Activated CD4-positive, alpha-beta T cell treated with anti-CD3 and anti-CD28 coated beads, Interleukin-2, amount 10 ng/mL, durations not matched to agents 24 days and 14 days (primary cell): ENCODE measurements at regions of chr3 and their contacts with region 1.

Region 1: GRCh38 chr3:58305882-58306711 is at the starts of genes HTD2 and RPP14:
- DNase-seq: peak; percentile 100
- H3K4me3 Mint-ChIP-seq: peak within 1 kb of the TSS; percentile 98
- H3K27ac Mint-ChIP-seq: peak within 1 kb of the TSS; percentile 99
- H3K4me1 Mint-ChIP-seq: peaks cover 22% of the 10 kb centered on the region
- H3K27me3 Mint-ChIP-seq: peaks cover 10% of the 10 kb centered on the region
- total RNA-seq, gene HTD2: 9.7 and 11.5 TPM in 2 replicates
- total RNA-seq, gene RPP14: 22.7 and 25.2 TPM in 2 replicates

Region 2: GRCh38 chr3:57597122-57597923 is 708.8 kb before region 1 on chr3 and contains the start of gene ARF4:
- intact Hi-C with region 1: loop called (anchors 1 kb)
- DNase-seq: peak; percentile 100
- H3K4me3 Mint-ChIP-seq: peak within 1 kb of the TSS; percentile 87
- H3K27ac Mint-ChIP-seq: peak within 1 kb of the TSS; percentile 99
- H3K4me1 Mint-ChIP-seq: peaks cover 32% of the 10 kb centered on the region
- H3K27me3 Mint-ChIP-seq: no peaks in the 10 kb centered on the region
- total RNA-seq, gene ARF4: 84.4 and 91.4 TPM in 2 replicates

Region 3: GRCh38 chr3:58202917-58203360 is 103.2 kb before region 1 on chr3:
- intact Hi-C with region 1: no loop called
- DNase-seq: no peak
- H3K4me3 Mint-ChIP-seq: no peak overlapping the region
- H3K27ac Mint-ChIP-seq: no peak overlapping the region
- H3K4me1 Mint-ChIP-seq: peaks cover 14% of the 10 kb centered on the region
- H3K27me3 Mint-ChIP-seq: peaks cover 15% of the 10 kb centered on the region

Region 4: GRCh38 chr3:58237238-58237940 is 68.7 kb before region 1 on chr3 and contains the start of gene ABHD6:
- intact Hi-C with region 1: loop called (anchors 1 kb)
- DNase-seq: peak; percentile 95
- H3K4me3 Mint-ChIP-seq: peak within 1 kb of the TSS; percentile 94
- H3K27ac Mint-ChIP-seq: peak within 1 kb of the TSS; percentile 83
- H3K4me1 Mint-ChIP-seq: peaks cover 15% of the 10 kb centered on the region
- H3K27me3 Mint-ChIP-seq: peaks cover 27% of the 10 kb centered on the region
- total RNA-seq, gene ABHD6: 9.8 and 10.8 TPM in 2 replicates

Region 5: DNA sequence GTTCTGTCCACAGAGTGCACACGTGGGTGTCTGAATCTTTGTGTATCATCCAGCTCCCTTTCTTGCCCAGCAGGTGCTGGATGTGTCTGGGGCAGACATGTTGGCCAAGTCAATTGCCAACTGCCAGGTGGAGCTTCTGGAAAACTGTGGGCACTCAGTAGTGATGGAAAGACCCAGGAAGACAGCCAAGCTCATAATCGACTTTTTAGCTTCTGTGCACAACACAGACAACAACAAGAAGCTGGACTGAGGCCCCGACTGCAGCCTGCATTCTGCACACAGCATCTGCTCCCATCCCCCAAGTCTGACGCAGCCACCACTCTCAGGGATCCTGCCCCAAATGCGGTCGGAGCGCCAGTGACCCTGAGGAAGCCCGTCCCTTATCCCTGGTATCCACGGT is 12.6 kb before region 1 on chr3:
- intact Hi-C with region 1: no loop called
- DNase-seq: no peak
- H3K4me3 Mint-ChIP-seq: no peak overlapping the region
- H3K27ac Mint-ChIP-seq: no peak overlapping the region
- H3K4me1 Mint-ChIP-seq: no peaks in the 10 kb centered on the region
- H3K27me3 Mint-ChIP-seq: no peaks in the 10 kb centered on the region

Region 6: DNA sequence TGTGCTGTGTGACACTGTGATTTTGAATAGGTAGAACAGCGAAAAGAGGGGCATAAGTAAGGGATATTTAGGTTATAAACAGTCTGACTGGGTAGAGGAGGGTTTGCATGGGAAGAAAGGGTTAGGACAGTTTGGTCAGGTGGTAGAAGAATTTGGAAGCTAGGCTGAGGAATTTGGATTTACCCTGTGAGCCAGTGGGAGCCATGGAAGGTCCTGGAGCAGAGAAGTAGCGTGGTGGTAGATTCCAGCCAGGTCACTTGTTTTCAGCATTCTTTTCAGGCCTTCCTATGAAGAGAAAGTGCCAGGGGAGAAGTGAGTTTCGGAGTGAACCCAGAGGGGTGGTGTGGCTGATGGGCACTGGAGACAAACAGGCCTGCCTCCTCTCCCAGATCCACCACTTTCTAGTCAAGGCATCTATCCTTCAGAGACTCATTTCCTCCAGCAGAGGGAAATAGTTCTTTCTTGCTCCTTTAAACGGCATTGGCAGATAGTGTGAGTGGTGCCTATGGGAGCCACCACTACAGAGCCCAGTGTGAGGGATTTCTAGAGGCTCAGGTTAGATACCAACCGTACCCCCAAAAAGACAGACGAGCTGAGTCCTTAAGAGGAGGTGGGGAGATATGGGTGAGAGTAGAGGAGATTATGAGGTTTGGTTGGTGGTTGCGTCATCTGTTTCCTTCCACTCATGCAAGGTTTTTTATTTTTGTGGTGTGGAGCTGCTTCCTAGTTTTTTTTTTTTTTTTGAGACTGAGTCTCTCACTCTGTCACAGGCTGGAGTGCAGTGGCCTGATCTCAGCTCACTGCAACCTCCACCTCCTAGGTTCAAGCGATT is 47.8 kb after region 1 on chr3:
- intact Hi-C with region 1: loop called (anchors 1 kb)
- DNase-seq: peak; percentile 87
- H3K4me3 Mint-ChIP-seq: peak overlapping the region; percentile 82
- H3K27ac Mint-ChIP-seq: peak overlapping the region; percentile 92
- H3K4me1 Mint-ChIP-seq: peaks cover 83% of the 10 kb centered on the region
- H3K27me3 Mint-ChIP-seq: no peaks in the 10 kb centered on the region

Region 7: GRCh38 chr3:58471025-58471887 is 165.2 kb after region 1 on chr3:
- intact Hi-C with region 1: loop called (anchors 1 kb)
- DNase-seq: peak; percentile 88
- H3K4me3 Mint-ChIP-seq: peak overlapping the region; percentile 46
- H3K27ac Mint-ChIP-seq: peak overlapping the region; percentile 62
- H3K4me1 Mint-ChIP-seq: peaks cover 45% of the 10 kb centered on the region
- H3K27me3 Mint-ChIP-seq: peaks cover 2% of the 10 kb centered on the region

Region 8: DNA sequence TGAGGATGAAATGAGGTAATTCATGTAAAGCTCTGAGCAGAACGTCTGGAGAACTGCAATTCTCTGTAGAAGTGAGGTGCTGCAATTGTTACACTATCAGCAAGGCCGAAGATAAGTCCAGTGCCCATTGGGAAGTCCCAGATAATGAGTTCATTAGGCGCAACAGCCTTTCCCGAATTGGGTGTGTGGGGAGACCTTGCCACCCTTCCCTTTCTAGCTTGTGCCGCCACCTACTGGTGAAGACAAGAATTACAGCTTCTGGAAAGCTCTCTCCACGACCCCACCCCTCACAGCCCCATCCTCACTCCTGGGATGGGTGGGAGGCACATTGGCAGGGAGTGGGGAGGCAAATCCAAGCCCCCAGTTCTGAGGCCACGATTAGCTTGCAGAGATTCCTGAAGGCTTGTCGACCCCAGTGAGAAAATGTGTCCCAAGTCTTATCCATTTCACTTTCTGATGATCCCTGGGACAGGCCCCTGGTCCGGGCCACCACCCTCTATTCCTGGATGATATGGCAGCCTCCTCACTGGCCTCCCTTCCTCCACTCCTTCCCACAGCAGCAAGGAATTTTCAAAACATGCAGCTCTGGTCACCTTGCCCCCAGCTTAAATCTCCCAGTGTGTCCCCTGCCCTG is 324.1 kb after region 1 on chr3:
- intact Hi-C with region 1: loop called (anchors 5 kb)
- DNase-seq: peak; percentile 89
- H3K4me3 Mint-ChIP-seq: no peak overlapping the region
- H3K27ac Mint-ChIP-seq: no peak overlapping the region
- H3K4me1 Mint-ChIP-seq: no peaks in the 10 kb centered on the region
- H3K27me3 Mint-ChIP-seq: peaks cover 5% of the 10 kb centered on the region